Colonic mucosa (tissue), 4 donors: ENCODE measurements at regions of chr9 and their contacts with region 1.

Region 1: DNA sequence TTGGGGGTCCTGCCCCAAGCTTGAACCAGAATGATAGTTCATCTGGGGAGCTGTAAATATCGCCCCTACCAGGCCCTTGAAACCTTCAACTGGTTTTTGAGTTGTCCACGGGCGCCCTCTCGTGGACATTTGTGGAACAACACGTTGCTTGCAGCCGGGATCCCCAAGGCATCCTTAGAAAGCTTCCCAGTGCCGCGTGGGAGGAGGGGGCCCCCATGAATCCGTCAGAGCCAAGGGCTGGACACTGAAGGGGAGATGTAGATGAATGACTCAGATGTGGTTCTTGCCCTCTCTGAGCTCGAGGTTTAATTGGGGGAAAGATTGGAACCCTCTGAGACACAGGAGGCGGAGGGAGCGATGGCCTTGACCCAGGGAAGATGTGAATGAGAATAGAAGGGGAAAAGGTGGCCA is 31.8 kb upstream of the ORM1 start:
- DNase-seq: peak; percentile 76
- H3K4me3 ChIP-seq: no peak overlapping the region
- H3K27ac ChIP-seq: no peak overlapping the region
- H3K4me1 ChIP-seq: no peaks in the 10 kb centered on the region
- H3K27me3 ChIP-seq: no peaks in the 10 kb centered on the region
- CTCF ChIP-seq: peak; percentile 98

Region 2: GRCh38 chr9:113963017-113963620 is 327.9 kb before region 1 on chr9:
- intact Hi-C with region 1: no loop called
- DNase-seq: peak; percentile 58
- H3K4me3 ChIP-seq: no peak overlapping the region
- H3K27ac ChIP-seq: no peak overlapping the region
- H3K4me1 ChIP-seq: no peaks in the 10 kb centered on the region
- H3K27me3 ChIP-seq: no peaks in the 10 kb centered on the region
- CTCF ChIP-seq: peak; percentile 73

Region 3: GRCh38 chr9:114082017-114082762 is 208.9 kb before region 1 on chr9:
- intact Hi-C with region 1: loop called (anchors 5 kb)
- DNase-seq: peak; percentile 96
- H3K4me3 ChIP-seq: no peak overlapping the region
- H3K27ac ChIP-seq: peak overlapping the region; percentile 78
- H3K4me1 ChIP-seq: peaks cover 5% of the 10 kb centered on the region
- H3K27me3 ChIP-seq: no peaks in the 10 kb centered on the region
- CTCF ChIP-seq: peak; percentile 85

Region 4: GRCh38 chr9:114155263-114155972 is 135.7 kb before region 1 on chr9 and contains the start of gene COL27A1:
- intact Hi-C with region 1: loop called (anchors 5 kb)
- DNase-seq: peak; percentile 84
- H3K4me3 ChIP-seq: peak within 1 kb of the TSS; percentile 42
- H3K27ac ChIP-seq: peak within 1 kb of the TSS; percentile 32
- H3K4me1 ChIP-seq: no peaks in the 10 kb centered on the region
- H3K27me3 ChIP-seq: peaks cover 32% of the 10 kb centered on the region
- CTCF ChIP-seq: peak; percentile 84
- total RNA-seq, gene COL27A1: 2.9 to 4.2 TPM